Heart right ventricle (tissue), 16 donors: ENCODE measurements at regions of chr9 and their contacts with region 1.

Region 1: GRCh38 chr9:79623799-79624721 is 52.3 kb downstream of the TLE4 start:
- DNase-seq: peak; percentile 19 to 49
- ATAC-seq: peak; percentile 59 to 91 (median 88)
- H3K4me3 ChIP-seq: peak overlapping the region in 1 of 10 donors; percentile 13
- H3K27ac ChIP-seq: peak overlapping the region in 8 of 10 donors; percentile 5 to 76 (median 30)
- H3K4me1 ChIP-seq: peaks cover 0 to 30% (median 20%) of the 10 kb centered on the region in 9 donors
- H3K27me3 ChIP-seq: no peaks in the 10 kb centered on the region
- CTCF ChIP-seq: no peak

Region 2: GRCh38 chr9:79425840-79426239 is 198.2 kb before region 1 on chr9:
- intact Hi-C with region 1: no loop called
- DNase-seq: no peak
- ATAC-seq: no peak
- H3K4me3 ChIP-seq: no peak overlapping the region
- H3K27ac ChIP-seq: no peak overlapping the region
- H3K4me1 ChIP-seq: no peaks in the 10 kb centered on the region
- H3K27me3 ChIP-seq: no peaks in the 10 kb centered on the region
- CTCF ChIP-seq: no peak

Region 3: DNA sequence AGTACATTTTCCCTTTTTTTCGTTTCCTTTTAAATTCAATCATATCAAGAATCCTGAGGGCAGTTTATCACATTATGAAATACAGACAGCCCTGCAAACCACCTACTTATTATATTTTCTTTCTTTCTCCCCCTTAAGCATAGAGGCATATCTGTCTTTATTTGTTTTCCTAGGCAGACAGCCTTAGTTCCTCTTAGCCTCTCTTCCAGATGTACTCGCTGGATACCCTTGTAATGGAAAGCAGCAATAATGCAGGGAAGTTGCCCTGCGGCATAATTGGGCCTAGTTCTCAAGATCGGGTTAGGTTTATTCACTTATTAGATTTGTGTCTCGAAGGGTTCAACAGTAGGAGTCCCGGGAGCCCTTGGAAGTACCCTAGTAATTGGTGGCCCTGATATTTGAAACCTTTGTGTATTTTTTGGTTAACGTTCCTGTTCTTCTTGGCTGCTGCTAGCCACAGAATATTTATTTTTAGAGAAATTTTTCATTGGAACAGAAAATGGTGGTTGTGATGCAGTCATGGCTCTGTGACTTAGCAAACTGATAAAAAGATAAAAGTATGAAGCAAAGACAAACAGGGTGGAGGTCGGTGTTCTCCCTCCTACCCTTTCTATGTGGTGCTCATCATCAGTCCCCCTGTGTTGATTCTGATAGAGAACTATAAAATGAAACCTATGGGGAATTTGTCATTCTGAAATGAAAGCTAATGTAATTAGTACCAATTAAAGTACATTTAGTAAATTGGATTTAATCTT is 45.9 kb before region 1 on chr9:
- intact Hi-C with region 1: loop called in 2 of 10 experiments (anchors 5 kb)
- DNase-seq: no peak
- ATAC-seq: peak in 5 of 8 donors; percentile 40 to 58 (median 41)
- H3K4me3 ChIP-seq: peak overlapping the region in 5 of 10 donors; percentile 4 to 23 (median 19)
- H3K27ac ChIP-seq: peak overlapping the region; percentile 2 to 75 (median 53)
- H3K4me1 ChIP-seq: peaks cover 4 to 86% (median 62%) of the 10 kb centered on the region in 9 donors
- H3K27me3 ChIP-seq: no peaks in the 10 kb centered on the region
- CTCF ChIP-seq: no peak